ENCODE measurements at regions of chr12 and their contacts with region 1.

Region 1: DNA sequence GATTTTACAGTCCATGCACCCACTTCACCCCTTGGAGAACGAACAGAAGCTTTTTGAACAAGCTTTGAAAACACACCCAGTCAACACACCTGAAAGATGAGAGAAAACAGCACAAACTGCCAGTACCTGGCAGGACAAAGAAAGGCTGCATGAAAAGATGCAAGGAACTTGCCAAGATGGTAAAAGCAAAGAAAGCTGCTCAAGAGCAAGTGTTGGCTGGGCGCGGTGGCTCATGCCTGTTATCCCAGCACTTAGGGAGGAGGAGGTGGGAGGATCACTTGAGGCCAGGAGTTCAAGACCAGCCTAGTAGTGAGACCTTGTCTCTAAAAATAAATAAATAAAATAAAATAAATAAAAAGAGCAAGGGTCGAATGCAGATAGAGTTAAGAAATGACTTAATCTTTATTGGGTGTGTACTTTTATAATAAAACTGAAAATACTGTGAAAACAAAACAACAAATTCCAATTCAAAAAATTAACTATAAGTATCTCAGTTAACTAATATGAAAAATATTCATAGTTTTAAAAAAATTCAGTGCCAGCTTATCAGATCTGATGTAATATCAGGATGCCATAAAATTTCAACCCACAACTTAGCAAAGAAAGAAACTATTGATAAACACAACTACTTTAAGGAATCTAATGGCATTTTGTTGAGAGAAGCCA is 59.2 kb downstream of the HECTD4 start:
- DNase-seq: no peak
- ATAC-seq: no peak
- H3K4me3 ChIP-seq: no peak overlapping the region
- H3K27ac ChIP-seq: no peak overlapping the region
- H3K4me1 ChIP-seq: no peaks in the 10 kb centered on the region
- H3K27me3 ChIP-seq: no peaks in the 10 kb centered on the region
- CTCF ChIP-seq: no peak

Region 2: GRCh38 chr12:112270673-112271072 is 52.3 kb before region 1 on chr12:
- CTCF ChIA-PET with region 1: no interaction called
- POLR2A ChIA-PET with region 1: no interaction called
- intact Hi-C with region 1: no loop called
- DNase-seq: no peak
- ATAC-seq: no peak
- H3K4me3 ChIP-seq: no peak overlapping the region
- H3K27ac ChIP-seq: no peak overlapping the region
- H3K4me1 ChIP-seq: no peaks in the 10 kb centered on the region
- H3K27me3 ChIP-seq: no peaks in the 10 kb centered on the region
- CTCF ChIP-seq: no peak

Region 3: DNA sequence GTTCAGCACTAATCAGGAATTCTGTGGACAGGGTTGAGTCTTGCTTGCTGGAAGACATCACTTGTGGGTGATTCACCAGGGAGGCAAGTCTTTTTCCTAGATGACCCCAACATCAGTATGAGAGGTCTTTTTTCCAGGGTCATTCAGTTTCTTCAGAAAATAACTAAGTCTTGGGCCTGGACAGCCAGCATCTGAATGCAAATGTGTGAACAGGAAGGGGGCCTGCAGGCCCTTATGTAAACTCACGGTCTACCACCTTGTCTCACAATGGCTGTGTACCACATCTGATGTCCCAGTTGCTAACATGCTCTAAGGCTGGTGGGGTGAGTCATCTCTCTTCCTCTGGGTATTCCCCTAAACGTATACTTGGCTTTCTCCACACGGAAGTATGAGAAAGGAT is 20.0 kb before region 1 on chr12:
- CTCF ChIA-PET with region 1: no interaction called
- POLR2A ChIA-PET with region 1: no interaction called
- intact Hi-C with region 1: loop called (anchors 2 kb)
- DNase-seq: peak; percentile 65
- ATAC-seq: peak; percentile 95
- H3K4me3 ChIP-seq: no peak overlapping the region
- H3K27ac ChIP-seq: peak overlapping the region; percentile 26
- H3K4me1 ChIP-seq: peaks cover 4% of the 10 kb centered on the region
- H3K27me3 ChIP-seq: no peaks in the 10 kb centered on the region
- CTCF ChIP-seq: no peak

Region 4: DNA sequence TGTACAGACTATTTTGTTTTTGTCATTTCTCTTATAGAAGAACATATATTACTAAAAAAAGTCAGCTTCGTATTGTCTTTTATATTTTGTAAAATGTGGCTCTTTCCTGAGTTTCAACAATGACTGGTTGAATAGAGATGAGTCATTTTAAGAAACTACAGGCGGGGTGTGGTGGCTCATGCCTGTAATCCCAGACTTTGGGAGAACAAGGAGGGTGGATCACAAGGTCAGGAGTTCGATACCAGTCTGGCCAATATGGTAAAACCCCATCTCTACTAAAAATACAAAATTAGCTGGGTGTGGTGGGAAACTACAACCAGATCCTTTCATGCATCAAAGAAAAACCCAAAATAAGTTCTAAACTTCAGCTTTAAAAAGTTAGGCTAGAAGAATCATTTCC is 30.4 kb after region 1 on chr12:
- CTCF ChIA-PET with region 1: no interaction called
- POLR2A ChIA-PET with region 1: no interaction called
- intact Hi-C with region 1: no loop called
- DNase-seq: peak; percentile 57
- ATAC-seq: peak; percentile 52
- H3K4me3 ChIP-seq: no peak overlapping the region
- H3K27ac ChIP-seq: peak overlapping the region; percentile 66
- H3K4me1 ChIP-seq: peaks cover 10% of the 10 kb centered on the region; the same call in 1 of the 2 replicates
- H3K27me3 ChIP-seq: no peaks in the 10 kb centered on the region
- CTCF ChIP-seq: no peak

Measured in PC-3 (cell line).